H1 (cell line): ENCODE measurements at regions of chr1 and their contacts with region 1.

Region 1: GRCh38 chr1:245888809-245889208 is 618.3 kb downstream of the SMYD3 start:
- DNase-seq: peak in 1 of 2 experiments; percentile 5
- H3K4me3 ChIP-seq: no peak overlapping the region
- H3K27ac ChIP-seq: no peak overlapping the region
- H3K4me1 ChIP-seq: no peaks in the 10 kb centered on the region
- H3K27me3 ChIP-seq: no peaks in the 10 kb centered on the region; a peak in 1 of 7 replicates
- CTCF ChIP-seq: peak in 2 of 3 experiments; percentile 51 to 72; a peak in 3 of 4 replicates
- EP300 ChIP-seq: no peak
- POLR2A ChIP-seq: no peak
- RAD21 ChIP-seq: peak; percentile 46 to 64

Region 2: DNA sequence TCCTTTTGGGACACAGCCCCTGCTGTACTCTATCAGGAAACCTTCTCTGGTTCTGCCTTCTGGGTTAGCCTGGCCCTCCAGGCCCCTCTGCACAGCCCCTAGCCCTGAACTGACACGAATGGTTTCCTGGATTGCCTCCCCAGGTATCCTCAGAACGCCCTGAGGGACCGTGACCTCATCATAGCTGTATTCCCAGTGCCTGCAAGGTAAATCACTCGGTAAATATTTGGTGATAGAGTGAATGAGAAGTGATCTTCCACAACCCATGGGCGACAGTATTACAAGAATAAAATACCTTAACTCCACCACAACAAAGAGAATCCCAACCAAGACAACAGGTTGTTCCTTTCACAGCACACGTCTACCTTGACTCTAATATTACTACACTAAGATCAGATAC is 18.9 kb before region 1 on chr1:
- CTCF ChIA-PET with region 1: interaction called, 19 read pairs
- POLR2A ChIA-PET with region 1: no interaction called
- DNase-seq: no peak
- H3K4me3 ChIP-seq: no peak overlapping the region
- H3K27ac ChIP-seq: no peak overlapping the region
- H3K4me1 ChIP-seq: no peaks in the 10 kb centered on the region
- H3K27me3 ChIP-seq: no peaks in the 10 kb centered on the region
- CTCF ChIP-seq: no peak
- EP300 ChIP-seq: no peak
- POLR2A ChIP-seq: no peak
- RAD21 ChIP-seq: no peak

Region 3: DNA sequence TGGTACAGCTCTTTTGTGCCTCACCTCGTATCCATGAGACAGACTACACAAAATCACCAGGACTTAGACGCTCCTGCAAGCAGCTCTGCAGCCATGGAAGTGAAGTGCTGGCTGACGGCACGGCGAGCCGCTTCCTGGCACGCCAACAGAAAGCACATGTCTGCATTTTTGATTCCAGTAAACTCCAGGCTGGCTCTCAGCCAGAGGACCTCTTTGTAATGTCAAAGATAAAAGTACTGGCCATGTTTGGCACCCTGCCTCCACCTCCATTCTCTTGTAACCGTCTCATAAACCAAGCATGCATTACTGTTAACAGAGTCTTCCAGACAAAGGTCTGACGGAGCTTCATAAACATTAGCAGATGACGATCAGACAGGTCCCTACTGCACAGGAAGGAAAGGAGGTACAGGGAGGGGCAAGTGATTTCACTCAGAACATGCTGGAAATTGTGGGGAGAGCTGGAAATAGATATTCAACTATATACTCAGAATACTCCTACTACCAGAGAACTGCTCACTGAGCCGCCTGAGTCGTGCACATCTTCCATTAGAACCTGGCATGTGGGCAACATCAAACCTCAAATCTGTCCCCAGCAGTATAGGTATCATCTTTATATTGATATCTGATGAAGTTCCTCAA is 13.7 kb before region 1 on chr1:
- CTCF ChIA-PET with region 1: interaction called, 19 read pairs
- POLR2A ChIA-PET with region 1: no interaction called
- DNase-seq: no peak
- H3K4me3 ChIP-seq: no peak overlapping the region
- H3K27ac ChIP-seq: no peak overlapping the region
- H3K4me1 ChIP-seq: no peaks in the 10 kb centered on the region
- H3K27me3 ChIP-seq: no peaks in the 10 kb centered on the region
- CTCF ChIP-seq: no peak
- EP300 ChIP-seq: no peak
- POLR2A ChIP-seq: no peak
- RAD21 ChIP-seq: no peak

Region 4: GRCh38 chr1:245901037-245901436 is 12.2 kb after region 1 on chr1:
- CTCF ChIA-PET with region 1: interaction called, 41 read pairs
- POLR2A ChIA-PET with region 1: no interaction called
- DNase-seq: no peak
- H3K4me3 ChIP-seq: no peak overlapping the region
- H3K27ac ChIP-seq: no peak overlapping the region
- H3K4me1 ChIP-seq: no peaks in the 10 kb centered on the region
- H3K27me3 ChIP-seq: no peaks in the 10 kb centered on the region
- CTCF ChIP-seq: no peak
- EP300 ChIP-seq: no peak
- POLR2A ChIP-seq: no peak
- RAD21 ChIP-seq: no peak

Region 5: GRCh38 chr1:245906207-245906606 is 17.4 kb after region 1 on chr1:
- CTCF ChIA-PET with region 1: interaction called, 41 read pairs
- POLR2A ChIA-PET with region 1: no interaction called
- DNase-seq: no peak
- H3K4me3 ChIP-seq: no peak overlapping the region
- H3K27ac ChIP-seq: no peak overlapping the region
- H3K4me1 ChIP-seq: no peaks in the 10 kb centered on the region
- H3K27me3 ChIP-seq: no peaks in the 10 kb centered on the region
- CTCF ChIP-seq: no peak
- EP300 ChIP-seq: no peak
- POLR2A ChIP-seq: no peak
- RAD21 ChIP-seq: no peak

Region 6: DNA sequence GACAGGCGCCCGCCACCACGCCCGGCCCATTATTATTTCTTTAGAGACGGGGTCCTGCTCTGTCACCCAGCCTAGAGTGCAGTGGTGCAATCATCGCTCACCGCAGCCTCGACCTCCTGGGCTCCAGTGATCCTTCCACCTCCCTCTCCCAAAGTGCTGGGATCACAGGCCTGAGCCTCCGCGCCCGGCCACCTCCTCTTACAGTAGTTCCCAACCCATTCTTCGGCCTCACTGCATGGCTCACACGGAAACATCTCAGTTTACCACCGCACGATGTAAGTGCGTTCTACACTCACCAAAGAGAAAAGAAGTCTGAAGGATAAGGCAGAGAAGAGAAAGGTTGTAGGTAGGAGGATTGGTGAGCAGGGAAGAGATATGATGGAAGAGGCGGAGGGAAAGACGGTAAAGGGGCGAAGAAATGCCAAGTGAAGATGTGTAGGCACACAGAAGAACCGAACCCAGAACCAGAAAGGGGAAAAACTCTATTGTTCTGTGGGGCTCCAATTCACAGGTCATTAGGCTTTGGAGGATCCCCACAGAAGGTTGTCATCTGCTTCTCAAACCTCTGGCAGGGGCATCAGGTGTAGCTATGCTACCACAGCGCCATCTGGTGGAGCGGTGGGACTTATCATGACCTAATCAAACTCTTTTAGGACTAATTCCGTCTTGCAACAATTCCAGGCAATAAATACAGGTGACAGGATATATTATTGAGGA is 114.1 kb after region 1 on chr1:
- CTCF ChIA-PET with region 1: interaction called, 16 read pairs
- POLR2A ChIA-PET with region 1: no interaction called
- DNase-seq: peak; percentile 51 to 89
- H3K4me3 ChIP-seq: no peak overlapping the region
- H3K27ac ChIP-seq: no peak overlapping the region
- H3K4me1 ChIP-seq: no peaks in the 10 kb centered on the region
- H3K27me3 ChIP-seq: no peaks in the 10 kb centered on the region
- CTCF ChIP-seq: peak; percentile 64 to 86 (median 85)
- EP300 ChIP-seq: no peak
- POLR2A ChIP-seq: no peak
- RAD21 ChIP-seq: peak; percentile 98 to 99

Region 7: GRCh38 chr1:246014966-246015365 is 126.2 kb after region 1 on chr1:
- CTCF ChIA-PET with region 1: no interaction called
- POLR2A ChIA-PET with region 1: no interaction called
- DNase-seq: no peak
- H3K4me3 ChIP-seq: no peak overlapping the region
- H3K27ac ChIP-seq: no peak overlapping the region
- H3K4me1 ChIP-seq: no peaks in the 10 kb centered on the region
- H3K27me3 ChIP-seq: no peaks in the 10 kb centered on the region
- CTCF ChIP-seq: no peak
- EP300 ChIP-seq: no peak
- POLR2A ChIP-seq: no peak
- RAD21 ChIP-seq: no peak